PC-3 (cell line): ENCODE measurements at regions of chr12 and their contacts with region 1.

Region 1: GRCh38 chr12:4526923-4527546 is 11.7 kb upstream of the RAD51AP1 start:
- DNase-seq: peak; percentile 31
- ATAC-seq: no peak
- H3K4me3 ChIP-seq: no peak overlapping the region
- H3K27ac ChIP-seq: no peak overlapping the region
- H3K4me1 ChIP-seq: no peaks in the 10 kb centered on the region
- H3K27me3 ChIP-seq: no peaks in the 10 kb centered on the region
- CTCF ChIP-seq: 0 out of 2 replicates have a peak, but pooled peaks have one; percentile 37

Region 2: GRCh38 chr12:4307593-4308333 is 219.3 kb before region 1 on chr12:
- CTCF ChIA-PET with region 1: no interaction called
- POLR2A ChIA-PET with region 1: no interaction called
- intact Hi-C with region 1: loop called (anchors 2 kb)
- DNase-seq: peak; percentile 83
- ATAC-seq: peak; percentile 94
- H3K4me3 ChIP-seq: peak overlapping the region; percentile 50
- H3K27ac ChIP-seq: no peak overlapping the region
- H3K4me1 ChIP-seq: peaks cover 7% of the 10 kb centered on the region
- H3K27me3 ChIP-seq: peaks cover 31% of the 10 kb centered on the region
- CTCF ChIP-seq: peak; percentile 76

Region 3: GRCh38 chr12:4353785-4354208 is 173.2 kb before region 1 on chr12:
- CTCF ChIA-PET with region 1: no interaction called
- POLR2A ChIA-PET with region 1: no interaction called
- intact Hi-C with region 1: loop called (anchors 5 kb)
- DNase-seq: peak; percentile 41
- ATAC-seq: peak; percentile 54
- H3K4me3 ChIP-seq: no peak overlapping the region
- H3K27ac ChIP-seq: no peak overlapping the region
- H3K4me1 ChIP-seq: no peaks in the 10 kb centered on the region
- H3K27me3 ChIP-seq: no peaks in the 10 kb centered on the region
- CTCF ChIP-seq: peak; percentile 51

Region 4: DNA sequence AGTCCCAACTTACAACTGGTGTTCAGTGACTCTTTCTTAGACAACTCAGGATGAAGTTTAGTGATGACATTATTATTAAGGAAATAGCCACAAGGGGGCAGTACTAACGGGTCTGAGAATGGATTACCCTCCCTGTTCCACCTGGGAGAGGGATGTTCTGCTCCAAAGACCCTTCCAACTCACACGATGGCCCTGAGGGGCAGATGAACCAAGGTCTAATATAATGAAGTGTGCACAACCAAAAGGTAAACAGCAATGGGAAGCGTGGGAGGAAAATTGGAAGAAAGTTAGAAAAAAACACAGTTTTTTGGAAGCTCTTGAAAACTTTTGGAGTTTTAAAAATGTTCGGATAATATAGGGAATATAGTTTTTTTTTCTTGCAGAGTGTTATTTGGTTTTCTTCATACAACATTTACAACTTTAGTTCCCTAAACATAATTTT is 105.4 kb before region 1 on chr12:
- CTCF ChIA-PET with region 1: no interaction called
- POLR2A ChIA-PET with region 1: no interaction called
- intact Hi-C with region 1: loop called (anchors 1 kb)
- DNase-seq: peak; percentile 62
- ATAC-seq: peak; percentile 54
- H3K4me3 ChIP-seq: no peak overlapping the region
- H3K27ac ChIP-seq: no peak overlapping the region
- H3K4me1 ChIP-seq: no peaks in the 10 kb centered on the region
- H3K27me3 ChIP-seq: peaks cover 23% of the 10 kb centered on the region
- CTCF ChIP-seq: peak; percentile 69

Region 5: GRCh38 chr12:4477129-4477528 is 49.9 kb before region 1 on chr12:
- CTCF ChIA-PET with region 1: no interaction called
- POLR2A ChIA-PET with region 1: no interaction called
- intact Hi-C with region 1: no loop called
- DNase-seq: peak; percentile 45
- ATAC-seq: no peak
- H3K4me3 ChIP-seq: no peak overlapping the region
- H3K27ac ChIP-seq: no peak overlapping the region
- H3K4me1 ChIP-seq: no peaks in the 10 kb centered on the region
- H3K27me3 ChIP-seq: peaks cover 24% of the 10 kb centered on the region
- CTCF ChIP-seq: no peak

Region 6: DNA sequence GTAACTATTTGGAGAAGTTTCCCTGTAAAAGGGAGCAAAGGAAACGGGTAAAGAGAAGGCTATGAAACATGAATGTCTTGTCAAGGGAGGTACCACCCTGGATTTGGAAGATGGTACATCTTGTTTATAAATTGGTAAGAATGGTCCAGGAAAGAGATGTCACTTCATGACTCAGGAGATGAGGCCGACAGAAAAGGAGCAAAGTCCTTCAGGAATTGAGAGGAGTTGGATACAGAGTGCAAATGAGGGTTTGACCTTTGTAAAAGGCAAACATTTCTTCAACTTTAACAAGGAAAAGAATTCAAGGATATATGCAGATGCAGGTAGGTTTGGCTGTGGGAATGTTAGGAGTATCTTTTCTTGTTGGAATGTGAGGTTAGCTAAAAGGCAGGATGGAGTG is 152.7 kb after region 1 on chr12:
- CTCF ChIA-PET with region 1: no interaction called
- POLR2A ChIA-PET with region 1: no interaction called
- intact Hi-C with region 1: no loop called
- DNase-seq: no peak
- ATAC-seq: no peak
- H3K4me3 ChIP-seq: no peak overlapping the region
- H3K27ac ChIP-seq: no peak overlapping the region
- H3K4me1 ChIP-seq: no peaks in the 10 kb centered on the region
- H3K27me3 ChIP-seq: no peaks in the 10 kb centered on the region
- CTCF ChIP-seq: no peak